B cell (primary cell): ENCODE measurements at regions of chr6 and their contacts with region 1.

Region 1: DNA sequence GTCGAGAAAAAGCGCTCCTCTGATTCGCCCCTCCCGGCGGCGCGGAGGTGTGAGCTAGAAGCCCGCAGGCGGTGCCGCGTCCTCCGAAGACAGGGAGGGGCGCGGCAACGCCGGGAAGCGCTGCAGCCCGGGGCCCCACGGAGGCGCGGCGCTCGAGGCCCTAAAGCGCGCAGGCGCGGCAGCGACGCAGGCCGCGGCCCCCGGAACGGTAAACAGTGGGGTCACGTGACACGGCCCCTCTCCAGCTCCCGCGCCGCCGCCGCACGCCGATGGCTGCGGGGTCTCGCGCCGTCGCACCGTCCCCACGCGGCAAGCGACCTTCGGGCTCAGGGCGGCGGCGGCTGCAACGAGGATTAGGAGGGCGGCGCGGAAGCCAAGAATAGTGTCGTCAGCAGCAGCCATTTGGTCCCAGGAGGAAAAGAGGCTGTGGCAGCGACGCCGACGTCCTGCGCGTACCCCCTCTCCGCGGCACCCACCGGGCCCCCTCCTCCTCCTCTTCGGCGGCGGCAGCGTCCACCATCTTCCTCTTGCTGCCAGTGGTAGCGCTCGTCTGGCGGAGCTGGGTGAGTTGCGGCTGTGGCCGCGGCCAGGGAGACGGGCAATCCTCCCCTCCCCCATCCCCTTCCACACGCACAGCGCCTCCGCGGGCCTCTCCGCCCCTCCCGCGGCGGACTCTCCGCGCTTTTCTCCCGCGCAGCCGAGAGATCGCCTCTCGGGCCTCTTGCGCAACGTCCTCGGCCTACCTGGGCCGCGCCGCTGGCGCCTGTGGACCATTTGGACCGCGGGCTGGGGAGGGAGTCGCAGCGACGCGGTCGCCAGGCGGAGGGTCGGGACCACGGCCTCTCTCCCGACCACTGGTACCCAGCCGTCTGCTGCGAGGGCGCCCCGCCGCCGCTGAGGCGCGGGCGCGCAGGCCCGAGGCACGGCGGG is at the start of gene PHF3:
- DNase-seq: peak; percentile 97
- ATAC-seq: peak; percentile 87
- H3K4me3 ChIP-seq: peak within 1 kb of the TSS; percentile 66 to 92 (median 86)
- H3K4me3 Mint-ChIP-seq: peak within 1 kb of the TSS; percentile 99
- H3K27ac ChIP-seq: peak within 1 kb of the TSS; percentile 92 to 98
- H3K27ac Mint-ChIP-seq: peak within 1 kb of the TSS; percentile 96
- H3K4me1 ChIP-seq: peaks cover 14 to 38% of the 10 kb centered on the region in 2 donors
- H3K4me1 Mint-ChIP-seq: peaks cover 47% of the 10 kb centered on the region
- H3K27me3 ChIP-seq: no peaks in the 10 kb centered on the region
- H3K27me3 Mint-ChIP-seq: peaks cover 3% of the 10 kb centered on the region
- CTCF ChIP-seq: no peak
- total RNA-seq, gene PHF3: 109 and 111 TPM in 2 replicates

Region 2: DNA sequence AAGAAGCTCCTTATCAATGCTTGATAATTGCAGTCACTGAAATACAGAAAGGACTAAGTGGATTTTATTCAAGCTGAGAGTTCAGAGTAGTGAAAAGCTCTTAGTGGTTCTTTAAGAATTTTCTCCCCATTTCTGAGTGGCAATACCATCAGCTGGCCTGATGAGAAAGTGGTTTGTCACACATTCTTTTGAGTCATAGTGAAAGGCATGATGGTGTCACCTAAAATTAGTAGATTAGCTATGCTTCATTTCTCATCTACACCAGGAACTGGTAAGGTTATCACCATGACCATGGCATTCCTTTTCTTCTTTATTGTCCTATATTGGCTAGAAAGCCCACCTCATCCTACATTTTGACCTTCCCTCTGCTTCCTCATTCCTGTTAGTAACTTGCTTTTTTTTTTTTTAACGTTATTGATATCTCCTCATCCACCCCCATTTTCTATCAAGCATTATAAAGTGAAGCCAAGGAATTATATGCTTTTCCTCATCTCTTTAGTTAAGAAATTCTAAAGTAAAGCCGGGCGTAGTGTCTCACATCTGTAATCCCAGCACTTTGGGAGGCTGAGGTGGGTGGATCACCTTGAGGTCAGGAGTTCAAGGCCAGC is 131.0 kb before region 1 on chr6:
- CTCF ChIA-PET with region 1: no interaction called
- POLR2A ChIA-PET with region 1: no interaction called
- intact Hi-C with region 1: no loop called
- DNase-seq: peak; percentile 10
- ATAC-seq: peak; percentile 28
- H3K4me3 ChIP-seq: no peak overlapping the region
- H3K4me3 Mint-ChIP-seq: no peak overlapping the region
- H3K27ac ChIP-seq: no peak overlapping the region
- H3K27ac Mint-ChIP-seq: no peak overlapping the region
- H3K4me1 ChIP-seq: peaks cover 0 to 7% of the 10 kb centered on the region in 2 donors
- H3K4me1 Mint-ChIP-seq: peaks cover 5% of the 10 kb centered on the region
- H3K27me3 ChIP-seq: no peaks in the 10 kb centered on the region
- H3K27me3 Mint-ChIP-seq: no peaks in the 10 kb centered on the region
- CTCF ChIP-seq: no peak

Region 3: DNA sequence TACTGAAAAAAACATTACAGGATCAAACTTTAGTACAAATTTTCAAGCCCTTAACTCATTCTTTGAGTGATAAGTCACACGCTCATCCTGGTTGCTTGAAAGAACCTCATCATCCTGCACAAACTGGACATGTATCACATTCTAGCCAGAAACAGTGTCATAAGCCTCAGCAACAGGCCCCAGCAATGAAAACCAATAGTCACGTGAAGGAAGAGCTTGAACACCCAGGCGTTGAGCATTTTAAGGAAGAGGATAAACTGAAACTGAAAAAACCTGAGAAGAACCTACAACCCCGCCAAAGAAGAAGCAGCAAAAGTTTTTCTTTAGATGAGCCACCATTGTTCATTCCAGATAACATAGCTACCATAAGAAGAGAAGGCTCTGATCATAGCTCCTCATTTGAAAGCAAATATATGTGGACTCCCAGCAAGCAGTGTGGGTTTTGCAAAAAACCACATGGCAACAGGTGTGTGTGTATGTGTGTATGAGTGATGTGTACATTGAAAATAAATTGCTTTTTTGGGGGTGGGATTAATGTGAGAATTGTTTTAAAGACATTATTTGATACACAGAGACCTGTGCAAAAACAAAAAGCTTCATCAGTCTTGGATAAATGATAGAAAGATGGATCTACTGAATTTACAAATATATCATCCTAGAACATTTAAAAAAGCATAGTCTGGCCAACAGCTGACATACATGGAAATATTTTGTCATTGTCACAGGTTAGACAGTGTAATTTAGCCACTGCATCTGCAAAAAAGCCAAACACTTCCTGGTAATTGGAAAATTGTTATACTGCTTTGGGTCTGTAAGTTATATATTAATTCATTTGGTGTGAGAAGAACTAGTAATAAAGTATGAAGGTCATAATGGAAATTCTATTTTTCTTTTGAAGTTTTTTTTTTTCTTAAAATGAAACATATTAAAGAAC is 49.9 kb after region 1 on chr6:
- CTCF ChIA-PET with region 1: interaction called, 5 read pairs
- POLR2A ChIA-PET with region 1: interaction called, 10 read pairs
- intact Hi-C with region 1: loop called (anchors 2 kb)
- DNase-seq: peak; percentile 71
- ATAC-seq: peak; percentile 92
- H3K4me3 ChIP-seq: no peak overlapping the region
- H3K4me3 Mint-ChIP-seq: peak overlapping the region; percentile 54
- H3K27ac ChIP-seq: peak overlapping the region; percentile 54 to 59
- H3K27ac Mint-ChIP-seq: peak overlapping the region; percentile 58
- H3K4me1 ChIP-seq: peaks cover 9 to 19% of the 10 kb centered on the region in 2 donors
- H3K4me1 Mint-ChIP-seq: peaks cover 53% of the 10 kb centered on the region
- H3K27me3 ChIP-seq: no peaks in the 10 kb centered on the region
- H3K27me3 Mint-ChIP-seq: no peaks in the 10 kb centered on the region
- CTCF ChIP-seq: no peak